Mammary epithelial cell (primary cell): ENCODE measurements at regions of chrX and their contacts with region 1.

Region 1: GRCh38 chrX:12946838-12947544 is 27.9 kb upstream of the TMSB4X start:
- DNase-seq: peak; percentile 95
- H3K4me3 ChIP-seq: no peak overlapping the region
- H3K27ac ChIP-seq: peak overlapping the region; percentile 86
- H3K4me1 ChIP-seq: peaks cover 16% of the 10 kb centered on the region
- H3K27me3 ChIP-seq: no peaks in the 10 kb centered on the region
- CTCF ChIP-seq: peak; percentile 100

Region 2: GRCh38 chrX:12570859-12571501 is 376.0 kb before region 1 on chrX:
- CTCF ChIA-PET with region 1: no interaction called
- dilution Hi-C with region 1: no loop called
- in situ Hi-C with region 1: no loop called
- intact Hi-C with region 1: no loop called
- DNase-seq: no peak
- H3K4me3 ChIP-seq: no peak overlapping the region
- H3K27ac ChIP-seq: no peak overlapping the region
- H3K4me1 ChIP-seq: no peaks in the 10 kb centered on the region
- H3K27me3 ChIP-seq: no peaks in the 10 kb centered on the region
- CTCF ChIP-seq: no peak

Region 3: DNA sequence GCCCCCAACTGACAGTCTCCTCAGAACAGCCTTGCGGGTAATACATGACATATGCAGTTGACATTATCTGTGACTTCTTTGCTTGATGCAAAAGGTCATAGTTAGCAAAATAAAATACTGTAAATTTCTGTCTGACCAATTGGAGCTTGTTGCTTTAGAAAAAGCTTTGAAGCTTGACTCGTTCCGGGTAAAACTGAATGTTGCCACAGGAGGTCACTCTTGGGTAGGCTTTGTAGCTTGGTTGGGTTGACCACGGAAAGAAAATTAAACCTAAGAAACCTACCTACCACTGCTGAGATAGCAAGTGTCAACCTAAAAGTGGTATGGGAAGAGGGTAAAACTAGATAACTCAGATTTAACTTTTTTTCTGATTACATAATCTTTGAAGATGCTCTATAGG is 132.6 kb before region 1 on chrX:
- CTCF ChIA-PET with region 1: interaction called, 10 read pairs
- dilution Hi-C with region 1: no loop called
- in situ Hi-C with region 1: no loop called
- intact Hi-C with region 1: no loop called
- DNase-seq: peak; percentile 40
- H3K4me3 ChIP-seq: no peak overlapping the region
- H3K27ac ChIP-seq: no peak overlapping the region
- H3K4me1 ChIP-seq: peaks cover 8% of the 10 kb centered on the region
- H3K27me3 ChIP-seq: no peaks in the 10 kb centered on the region
- CTCF ChIP-seq: peak; percentile 49 to 69

Region 4: GRCh38 chrX:13005661-13006473 is 58.9 kb after region 1 on chrX:
- CTCF ChIA-PET with region 1: no interaction called
- dilution Hi-C with region 1: no loop called
- in situ Hi-C with region 1: no loop called
- intact Hi-C with region 1: loop called (anchors 2 kb)
- DNase-seq: peak; percentile 42
- H3K4me3 ChIP-seq: no peak overlapping the region
- H3K27ac ChIP-seq: no peak overlapping the region
- H3K4me1 ChIP-seq: peaks cover 67% of the 10 kb centered on the region
- H3K27me3 ChIP-seq: no peaks in the 10 kb centered on the region
- CTCF ChIP-seq: no peak

Region 5: DNA sequence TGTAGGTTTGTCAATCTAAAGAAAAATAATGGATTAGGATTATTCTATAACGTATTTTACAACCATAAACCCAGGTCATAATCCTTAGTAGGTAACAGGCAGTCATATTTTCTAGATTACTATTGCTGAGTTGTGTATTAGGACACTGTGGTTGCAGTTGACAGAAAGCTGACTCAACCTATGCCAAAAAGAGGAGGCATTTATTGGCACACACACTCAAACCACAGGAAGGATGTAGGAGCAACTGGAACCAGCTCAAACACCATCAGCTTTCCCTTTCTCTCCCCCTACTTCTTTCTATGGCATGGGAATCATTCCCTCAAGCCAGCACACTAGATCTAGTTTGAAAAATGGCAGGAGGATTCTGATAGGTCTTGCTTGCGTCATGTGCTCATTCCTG is 233.8 kb after region 1 on chrX:
- CTCF ChIA-PET with region 1: no interaction called
- dilution Hi-C with region 1: no loop called
- in situ Hi-C with region 1: no loop called
- intact Hi-C with region 1: loop called (anchors 5 kb)
- DNase-seq: peak; percentile 89
- H3K4me3 ChIP-seq: no peak overlapping the region
- H3K27ac ChIP-seq: no peak overlapping the region
- H3K4me1 ChIP-seq: peaks cover 26% of the 10 kb centered on the region
- H3K27me3 ChIP-seq: no peaks in the 10 kb centered on the region
- CTCF ChIP-seq: no peak

Region 6: GRCh38 chrX:13283950-13284914 is 337.2 kb after region 1 on chrX:
- CTCF ChIA-PET with region 1: no interaction called
- dilution Hi-C with region 1: no loop called
- in situ Hi-C with region 1: no loop called
- intact Hi-C with region 1: loop called (anchors 5 kb)
- DNase-seq: peak; percentile 84
- H3K4me3 ChIP-seq: no peak overlapping the region
- H3K27ac ChIP-seq: peak overlapping the region; percentile 87
- H3K4me1 ChIP-seq: peaks cover 37% of the 10 kb centered on the region
- H3K27me3 ChIP-seq: no peaks in the 10 kb centered on the region
- CTCF ChIP-seq: no peak

Region 7: GRCh38 chrX:13341491-13342101 is 394.6 kb after region 1 on chrX:
- CTCF ChIA-PET with region 1: no interaction called
- dilution Hi-C with region 1: no loop called
- in situ Hi-C with region 1: no loop called
- intact Hi-C with region 1: loop called (anchors 5 kb)
- DNase-seq: no peak
- H3K4me3 ChIP-seq: no peak overlapping the region
- H3K27ac ChIP-seq: no peak overlapping the region
- H3K4me1 ChIP-seq: peaks cover 9% of the 10 kb centered on the region
- H3K27me3 ChIP-seq: no peaks in the 10 kb centered on the region
- CTCF ChIP-seq: no peak

Region 8: DNA sequence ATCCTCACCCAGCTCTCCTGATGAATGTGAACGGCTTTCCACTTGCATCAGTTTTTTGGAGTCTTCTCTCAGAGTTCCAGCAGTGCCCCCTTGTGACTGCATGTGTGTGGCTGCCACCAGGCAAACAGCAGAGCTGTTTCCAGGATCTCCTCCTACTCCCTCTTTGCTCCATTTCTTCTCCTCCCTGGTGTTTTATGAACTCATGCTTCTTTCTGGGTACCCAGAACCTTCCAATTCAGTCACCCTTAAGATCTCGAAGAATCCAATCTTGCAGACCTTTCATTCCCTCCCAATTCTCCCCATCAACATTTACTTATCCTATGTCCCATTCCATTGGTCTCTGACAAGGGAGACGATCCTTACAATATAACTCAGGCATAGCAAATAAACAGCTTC is 699.2 kb after region 1 on chrX:
- CTCF ChIA-PET with region 1: interaction called, 4 read pairs
- dilution Hi-C with region 1: no loop called
- in situ Hi-C with region 1: no loop called
- intact Hi-C with region 1: loop called (anchors 2 kb)
- DNase-seq: peak; percentile 53
- H3K4me3 ChIP-seq: no peak overlapping the region
- H3K27ac ChIP-seq: no peak overlapping the region
- H3K4me1 ChIP-seq: no peaks in the 10 kb centered on the region
- H3K27me3 ChIP-seq: peaks cover 3% of the 10 kb centered on the region
- CTCF ChIP-seq: peak; percentile 81 to 94